CD4-positive, alpha-beta T cell (primary cell): ENCODE measurements at regions of chr16 and their contacts with region 1.

Region 1: GRCh38 chr16:69223882-69224281 is 36.9 kb downstream of the SNTB2 start:
- DNase-seq: no peak
- ATAC-seq: no peak
- H3K4me3 ChIP-seq: no peak overlapping the region
- H3K4me3 Mint-ChIP-seq: no peak overlapping the region
- H3K27ac ChIP-seq: no peak overlapping the region
- H3K27ac Mint-ChIP-seq: no peak overlapping the region
- H3K4me1 ChIP-seq: no peaks in the 10 kb centered on the region
- H3K4me1 Mint-ChIP-seq: peaks cover 6% of the 10 kb centered on the region
- H3K27me3 ChIP-seq: no peaks in the 10 kb centered on the region
- H3K27me3 Mint-ChIP-seq: no peaks in the 10 kb centered on the region
- CTCF ChIP-seq: no peak

Region 2: GRCh38 chr16:69589434-69590269 is 365.8 kb after region 1 on chr16:
- CTCF ChIA-PET with region 1: no interaction called
- POLR2A ChIA-PET with region 1: no interaction called
- intact Hi-C with region 1: loop called in 1 of 2 experiments (anchors 5 kb)
- DNase-seq: no peak
- ATAC-seq: no peak
- H3K4me3 ChIP-seq: no peak overlapping the region
- H3K4me3 Mint-ChIP-seq: no peak overlapping the region
- H3K27ac ChIP-seq: no peak overlapping the region
- H3K27ac Mint-ChIP-seq: no peak overlapping the region
- H3K4me1 ChIP-seq: peaks cover 3% of the 10 kb centered on the region
- H3K4me1 Mint-ChIP-seq: peaks cover 43% of the 10 kb centered on the region
- H3K27me3 ChIP-seq: no peaks in the 10 kb centered on the region
- H3K27me3 Mint-ChIP-seq: no peaks in the 10 kb centered on the region
- CTCF ChIP-seq: no peak